AG04449 (cell line): ENCODE measurements at regions of chr11 and their contacts with region 1.

Region 1: DNA sequence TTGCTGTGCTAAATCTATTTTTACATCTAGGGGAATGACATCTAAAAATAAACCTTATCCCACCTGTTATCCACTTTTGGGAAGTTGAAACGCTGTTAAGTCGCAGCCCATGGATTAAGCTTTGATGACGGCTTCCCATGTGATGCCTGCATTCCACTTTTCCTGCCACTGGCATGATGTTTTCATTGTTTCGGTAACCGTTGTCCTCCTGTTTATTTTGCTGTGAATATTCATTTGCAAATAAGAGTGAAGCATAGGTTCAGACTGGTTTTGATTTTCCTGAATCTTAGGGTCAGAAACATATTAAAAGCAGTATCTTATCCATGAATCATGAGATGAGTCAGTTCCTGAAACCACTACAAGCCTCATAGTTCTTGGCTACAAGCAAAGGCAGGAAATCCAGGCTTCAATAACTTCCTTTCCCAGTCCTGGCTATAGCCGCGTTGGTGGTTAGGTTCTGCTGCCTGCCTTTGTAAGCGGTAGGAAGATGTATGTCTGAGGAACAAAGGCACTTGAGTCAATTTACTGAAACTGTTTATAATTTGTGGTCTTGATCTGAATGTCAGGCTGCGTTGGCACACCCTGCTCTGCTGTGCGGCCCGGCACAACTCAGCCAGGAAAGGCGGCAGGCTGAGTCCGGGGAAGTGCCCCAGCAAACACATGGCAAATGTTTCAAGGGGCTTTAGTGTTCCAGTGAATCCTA is 19.4 kb downstream of the TEAD1 start:
- DNase-seq: peak; percentile 91
- H3K4me3 ChIP-seq: peak overlapping the region; percentile 42
- CTCF ChIP-seq: no peak

Region 2: DNA sequence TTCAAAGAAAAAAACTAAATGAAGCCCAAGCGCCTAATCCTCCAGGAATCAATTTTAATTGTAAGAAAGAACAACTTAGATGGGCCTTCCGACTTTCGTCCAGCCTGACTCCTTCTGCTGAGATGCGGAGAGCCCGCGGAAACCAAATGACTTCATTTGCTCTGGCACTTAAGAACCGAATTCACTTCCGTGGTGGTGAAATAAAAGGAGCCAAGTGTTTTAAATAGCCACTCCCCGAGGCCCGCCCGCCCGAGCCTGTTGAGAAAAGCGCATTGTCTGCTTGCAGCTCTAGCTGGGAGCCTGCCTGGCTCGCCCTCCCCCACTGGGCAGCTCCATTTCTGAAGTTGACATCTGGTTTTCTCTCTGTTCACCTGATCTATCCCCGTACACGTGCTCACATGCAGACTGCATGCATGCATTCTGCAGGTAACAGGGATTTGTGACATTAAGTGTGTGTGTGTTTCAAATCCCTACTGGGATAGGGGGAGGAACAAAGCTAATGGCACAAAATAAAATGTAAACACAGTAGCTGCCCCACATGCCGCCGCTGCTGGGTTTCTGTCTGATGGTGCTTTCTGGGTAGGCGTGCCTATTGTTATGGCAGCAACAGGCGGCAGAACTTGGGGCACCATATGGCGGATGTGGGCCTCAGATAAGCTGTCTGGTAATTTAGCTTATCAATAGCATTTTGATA is 13.2 kb before region 1 on chr11:
- CTCF ChIA-PET with region 1: interaction called, 10 read pairs
- POLR2A ChIA-PET with region 1: no interaction called
- DNase-seq: peak; percentile 60
- H3K4me3 ChIP-seq: peak overlapping the region; percentile 31
- CTCF ChIP-seq: no peak

Region 3: GRCh38 chr11:12706545-12707499 is 13.2 kb after region 1 on chr11:
- CTCF ChIA-PET with region 1: interaction called, 11 read pairs
- POLR2A ChIA-PET with region 1: interaction called, 3 read pairs
- DNase-seq: no peak
- H3K4me3 ChIP-seq: no peak overlapping the region
- CTCF ChIP-seq: no peak